Activated CD4-positive, alpha-beta memory T cell treated with anti-CD3 and anti-CD28 coated beads for 36 hours (primary cell): ENCODE measurements at regions of chr1 and their contacts with region 1.

Region 1: DNA sequence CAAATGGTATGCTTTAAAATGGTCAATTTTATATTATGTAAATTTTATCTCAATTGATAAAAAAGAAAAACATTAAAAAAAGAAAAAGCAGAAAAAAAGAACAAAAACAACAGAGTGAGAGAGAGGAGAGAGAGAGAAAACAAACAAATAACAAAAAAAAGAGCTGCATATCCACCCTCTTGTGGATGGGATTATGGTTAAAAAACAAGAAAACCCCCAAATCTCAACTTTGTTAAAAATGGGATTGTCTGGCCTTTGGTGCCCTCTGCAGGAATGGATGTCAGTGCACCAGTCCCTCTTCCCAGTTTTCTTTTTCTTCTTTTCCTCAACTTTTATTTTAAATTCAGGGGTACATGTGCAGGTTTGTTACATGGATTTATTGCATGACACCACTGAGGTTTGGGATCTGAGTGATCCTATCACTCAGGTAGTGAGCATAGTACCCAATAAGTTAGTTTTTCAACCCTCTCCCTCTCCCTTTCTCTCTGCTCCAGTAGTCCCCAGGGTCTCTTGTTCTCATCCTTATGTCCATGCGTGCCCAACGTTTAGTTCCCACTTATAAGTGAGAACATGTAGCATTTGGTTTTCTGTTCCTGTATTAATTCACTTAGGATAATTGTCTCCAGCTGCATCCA is 28.1 kb downstream of the RNF187 start:
- DNase-seq: peak; percentile 31
- H3K4me3 Mint-ChIP-seq: no peak overlapping the region
- H3K27ac Mint-ChIP-seq: no peak overlapping the region
- H3K4me1 Mint-ChIP-seq: peaks cover 5% of the 10 kb centered on the region
- H3K27me3 Mint-ChIP-seq: peaks cover 6% of the 10 kb centered on the region

Region 2: DNA sequence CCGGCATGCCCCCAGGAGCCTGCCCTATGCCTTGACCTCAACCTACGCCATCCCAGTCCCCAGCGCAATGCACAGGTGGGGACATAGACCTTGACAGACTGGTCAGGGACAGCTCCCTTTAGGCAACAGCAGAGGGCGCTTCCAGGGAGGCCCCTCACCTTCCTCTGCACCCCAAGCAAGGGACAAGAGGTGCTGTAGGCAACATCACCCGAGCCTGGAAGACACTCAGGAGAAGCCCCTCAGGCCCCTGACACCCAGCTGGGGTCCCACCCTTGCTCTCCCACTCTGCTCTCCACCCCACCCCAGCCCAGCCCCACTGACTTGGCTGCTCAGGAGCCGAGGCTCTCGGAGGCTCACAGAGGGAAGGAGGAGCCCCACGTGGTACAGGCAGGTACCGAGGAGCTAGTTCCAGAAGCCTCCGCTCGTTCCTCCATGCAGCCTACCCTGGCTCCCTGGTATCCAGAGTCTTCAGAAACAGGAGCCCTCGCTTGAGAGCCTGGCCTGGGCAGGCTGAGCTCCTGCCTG is 510.9 kb before region 1 on chr1:
- CTCF ChIA-PET with region 1: interaction called, 4 read pairs
- POLR2A ChIA-PET with region 1: no interaction called
- intact Hi-C with region 1: loop called (anchors 5 kb)
- DNase-seq: no peak
- H3K4me3 Mint-ChIP-seq: no peak overlapping the region
- H3K27ac Mint-ChIP-seq: no peak overlapping the region
- H3K4me1 Mint-ChIP-seq: peaks cover 10% of the 10 kb centered on the region
- H3K27me3 Mint-ChIP-seq: peaks cover 53% of the 10 kb centered on the region

Region 3: GRCh38 chr1:228131766-228132165 is 383.6 kb before region 1 on chr1:
- CTCF ChIA-PET with region 1: interaction called, 5 read pairs
- POLR2A ChIA-PET with region 1: no interaction called
- intact Hi-C with region 1: loop called (anchors 2 kb)
- DNase-seq: no peak
- H3K4me3 Mint-ChIP-seq: no peak overlapping the region
- H3K27ac Mint-ChIP-seq: no peak overlapping the region
- H3K4me1 Mint-ChIP-seq: peaks cover 2% of the 10 kb centered on the region
- H3K27me3 Mint-ChIP-seq: peaks cover 11% of the 10 kb centered on the region

Region 4: DNA sequence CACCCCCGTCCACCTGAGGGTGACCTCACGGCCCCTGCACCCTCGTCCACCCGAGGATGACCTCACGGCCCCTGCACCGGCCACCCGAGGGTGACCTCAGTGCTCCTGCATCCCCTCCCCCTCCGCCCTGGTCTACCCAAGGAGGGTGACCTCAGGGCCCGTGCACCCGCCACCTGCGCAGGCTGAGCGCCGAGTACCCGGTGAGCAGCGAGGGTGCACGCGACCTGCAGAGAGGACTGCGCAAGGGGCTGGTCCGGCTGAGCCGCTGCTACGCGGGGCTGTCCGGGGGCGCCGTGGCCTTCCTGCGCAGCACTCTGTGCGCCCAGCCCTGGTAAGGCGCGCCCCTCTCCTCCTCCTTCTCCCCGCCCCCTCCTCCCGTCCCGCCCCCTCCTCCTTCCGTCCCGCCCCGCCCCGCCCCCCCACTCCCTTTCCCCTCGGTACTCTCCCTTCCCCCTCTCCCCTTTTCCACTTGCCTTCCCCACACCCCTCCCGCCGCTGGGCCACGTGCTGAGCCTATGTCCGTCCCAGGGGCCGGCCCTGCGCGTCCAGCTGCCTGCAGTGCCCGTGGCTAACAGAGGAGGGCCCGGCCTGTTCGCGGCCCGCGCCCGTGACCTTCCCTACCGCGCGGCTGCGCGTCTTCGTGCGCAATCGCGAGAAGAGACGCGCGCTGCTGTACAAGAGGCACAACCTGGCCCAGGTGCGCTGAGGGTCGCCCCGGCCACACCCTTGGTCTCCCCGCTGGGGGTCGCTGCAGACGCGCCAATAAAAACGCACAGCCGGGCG is 137.0 kb before region 1 on chr1:
- CTCF ChIA-PET with region 1: interaction called, 4 read pairs
- POLR2A ChIA-PET with region 1: no interaction called
- intact Hi-C with region 1: loop called (anchors 2 kb)
- DNase-seq: peak; percentile 81
- H3K4me3 Mint-ChIP-seq: peak overlapping the region; percentile 74
- H3K27ac Mint-ChIP-seq: no peak overlapping the region
- H3K4me1 Mint-ChIP-seq: peaks cover 11% of the 10 kb centered on the region
- H3K27me3 Mint-ChIP-seq: peaks cover 10% of the 10 kb centered on the region

Region 5: DNA sequence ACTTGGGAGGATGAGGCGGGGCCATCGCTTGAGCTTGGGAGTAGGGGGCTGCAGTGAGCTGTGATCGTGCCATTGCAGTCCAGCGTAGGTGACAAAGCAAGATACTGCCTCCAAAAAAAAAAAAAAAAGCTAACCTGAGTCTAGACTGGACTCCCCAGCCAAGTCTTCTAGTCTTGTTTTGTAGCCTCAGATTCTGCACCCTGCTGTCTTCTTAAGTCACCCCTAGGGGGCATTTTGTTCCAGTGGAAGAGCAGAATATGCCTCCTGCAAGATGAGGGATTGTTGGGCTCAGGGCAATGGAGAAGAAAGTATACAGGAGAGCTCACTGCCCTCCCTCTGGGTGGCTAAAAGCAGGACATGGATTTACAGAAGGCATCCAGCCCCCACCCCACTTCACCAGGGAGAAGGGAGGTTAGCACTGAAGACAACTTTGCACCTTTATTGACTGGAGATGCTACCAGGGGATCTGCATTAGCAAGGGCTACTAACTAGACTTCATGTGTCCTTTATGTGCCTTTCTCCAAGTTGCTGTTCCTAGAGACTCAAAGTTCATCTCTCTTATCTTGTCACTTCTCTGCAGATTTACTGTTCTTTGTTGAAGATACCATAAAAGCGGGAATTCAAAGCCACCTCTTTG is 43.4 kb before region 1 on chr1:
- CTCF ChIA-PET with region 1: interaction called, 4 read pairs
- POLR2A ChIA-PET with region 1: no interaction called
- intact Hi-C with region 1: loop called (anchors 1 kb)
- DNase-seq: peak; percentile 32
- H3K4me3 Mint-ChIP-seq: no peak overlapping the region
- H3K27ac Mint-ChIP-seq: no peak overlapping the region
- H3K4me1 Mint-ChIP-seq: peaks cover 7% of the 10 kb centered on the region
- H3K27me3 Mint-ChIP-seq: peaks cover 6% of the 10 kb centered on the region